ENCODE measurements at regions of chr12 and their contacts with region 1.

Region 1: GRCh38 chr12:67014642-67015041 is 254.5 kb upstream of the CAND1 start:
- DNase-seq: no peak
- CTCF ChIP-seq: no peak

Region 2: GRCh38 chr12:67025543-67026114 is 11.0 kb after region 1 on chr12:
- CTCF ChIA-PET with region 1: interaction called, 14 read pairs
- POLR2A ChIA-PET with region 1: no interaction called
- DNase-seq: peak; percentile 40
- CTCF ChIP-seq: peak; percentile 72